GM12878 (cell line): ENCODE measurements at regions of chr20 and their contacts with region 1.

Region 1: GRCh38 chr20:33826270-33826897 is 15.2 kb downstream of the CHMP4B start:
- DNase-seq: no peak
- ATAC-seq: no peak; the same call in 2 of the 3 replicates
- H3K4me3 ChIP-seq: no peak overlapping the region
- H3K27ac ChIP-seq: no peak overlapping the region
- H3K4me1 ChIP-seq: peaks cover 9% of the 10 kb centered on the region
- H3K27me3 ChIP-seq: no peaks in the 10 kb centered on the region
- CTCF ChIP-seq: no peak
- EP300 ChIP-seq: no peak
- POLR2A ChIP-seq: no peak
- RAD21 ChIP-seq: no peak

Region 2: DNA sequence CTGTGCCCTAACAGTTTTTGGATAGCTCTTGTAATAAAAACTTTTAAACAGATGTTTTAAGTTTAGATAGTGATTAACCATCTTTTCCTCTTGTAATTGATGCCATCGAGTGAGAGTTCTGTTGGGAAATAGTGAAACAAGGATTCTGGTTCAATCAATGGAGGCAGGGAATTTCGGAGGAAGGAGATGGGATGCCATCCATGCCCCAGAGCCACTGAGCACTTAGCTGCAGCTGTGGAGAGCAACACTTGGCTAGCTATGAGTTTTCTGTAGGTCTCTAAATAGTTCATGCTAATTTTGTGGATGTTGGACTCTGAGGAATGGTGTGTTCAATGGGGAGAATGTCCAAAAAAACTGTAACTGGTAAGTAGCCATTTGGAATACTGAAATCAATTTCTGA is 319.8 kb before region 1 on chr20:
- CTCF ChIA-PET with region 1: no interaction called
- POLR2A ChIA-PET with region 1: no interaction called
- RAD21 ChIA-PET with region 1: no interaction called
- SMC1A ChIA-PET with region 1: no interaction called
- in situ Hi-C with region 1: no loop called
- intact Hi-C with region 1: no loop called
- DNase-seq: no peak
- ATAC-seq: no peak
- H3K4me3 ChIP-seq: no peak overlapping the region
- H3K27ac ChIP-seq: no peak overlapping the region
- H3K4me1 ChIP-seq: peaks cover 5% of the 10 kb centered on the region; the same call in 1 of the 2 replicates
- H3K27me3 ChIP-seq: no peaks in the 10 kb centered on the region
- CTCF ChIP-seq: no peak
- EP300 ChIP-seq: no peak
- POLR2A ChIP-seq: no peak
- RAD21 ChIP-seq: no peak

Region 3: GRCh38 chr20:33791959-33792597 is 34.3 kb before region 1 on chr20:
- CTCF ChIA-PET with region 1: interaction called, 16 read pairs
- POLR2A ChIA-PET with region 1: no interaction called
- RAD21 ChIA-PET with region 1: no interaction called
- SMC1A ChIA-PET with region 1: interaction called, 3 read pairs
- in situ Hi-C with region 1: no loop called
- intact Hi-C with region 1: no loop called
- DNase-seq: no peak
- ATAC-seq: peak; percentile 82
- H3K4me3 ChIP-seq: no peak overlapping the region
- H3K27ac ChIP-seq: no peak overlapping the region
- H3K4me1 ChIP-seq: no peaks in the 10 kb centered on the region
- H3K27me3 ChIP-seq: no peaks in the 10 kb centered on the region
- CTCF ChIP-seq: peak; percentile 56 to 78 (median 69)
- EP300 ChIP-seq: no peak
- POLR2A ChIP-seq: no peak
- RAD21 ChIP-seq: peak; percentile 65